ENCODE measurements at regions of chr4 and their contacts with region 1.

Region 1: GRCh38 chr4:55546756-55547465 is at the start of gene CLOCK:
- DNase-seq: peak; percentile 60 to 91 (median 82)
- ATAC-seq: peak; percentile 72
- H3K4me3 ChIP-seq: peak within 1 kb of the TSS; percentile 90 to 91
- H3K4me3 Mint-ChIP-seq: peak within 1 kb of the TSS; percentile 93
- H3K27ac ChIP-seq: peak within 1 kb of the TSS; percentile 71 to 82
- H3K27ac Mint-ChIP-seq: peak within 1 kb of the TSS; percentile 93
- H3K4me1 ChIP-seq: peaks cover 9% of the 10 kb centered on the region
- H3K4me1 Mint-ChIP-seq: peaks cover 40% of the 10 kb centered on the region
- H3K27me3 ChIP-seq: no peaks in the 10 kb centered on the region
- H3K27me3 Mint-ChIP-seq: peaks cover 5% of the 10 kb centered on the region
- CTCF ChIP-seq: peak; percentile 41
- total RNA-seq, gene CLOCK: 3.7 to 4.3 TPM

Region 2: DNA sequence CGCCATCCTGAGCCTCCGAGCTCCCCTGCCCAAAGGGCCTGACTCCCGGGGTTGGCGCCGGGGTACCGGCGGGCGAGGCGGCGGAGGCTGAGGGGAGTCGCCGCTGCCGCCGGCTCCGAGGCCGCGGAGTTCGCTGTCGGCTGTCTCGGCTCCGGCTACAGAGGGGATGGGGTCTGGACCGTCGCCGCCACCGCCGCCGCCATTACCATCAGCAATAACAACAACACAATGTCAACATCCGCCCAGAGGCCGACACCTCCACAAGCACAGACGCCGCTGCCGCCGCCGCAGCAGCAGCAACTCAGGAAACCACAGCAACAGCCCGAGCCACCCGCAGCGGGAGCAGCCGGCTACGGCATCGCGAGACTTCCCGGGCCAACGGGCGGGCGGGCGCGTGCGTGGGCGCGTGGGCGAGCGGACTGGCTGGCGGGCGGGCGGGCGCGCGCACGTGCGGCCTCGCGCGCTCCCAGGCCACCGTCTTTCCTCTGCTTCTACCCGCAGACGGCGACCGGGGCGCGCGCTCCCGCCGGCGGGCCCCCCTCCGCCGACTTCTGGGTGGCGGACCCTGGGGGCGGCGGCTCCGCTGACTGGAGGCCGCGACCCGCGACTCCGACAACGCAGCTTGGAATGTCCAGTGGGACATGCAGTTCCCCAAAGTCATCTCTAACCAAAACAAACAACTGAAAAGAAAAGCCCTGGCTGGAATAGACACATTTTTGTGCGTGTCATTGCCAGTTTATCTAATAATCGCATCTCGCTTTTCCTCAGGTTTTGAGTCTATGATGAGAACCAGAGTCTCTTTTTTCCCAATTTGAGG is 1482.4 kb before region 1 on chr4 and contains the start of gene CHIC2:
- CTCF ChIA-PET with region 1: no interaction called
- POLR2A ChIA-PET with region 1: no interaction called
- intact Hi-C with region 1: loop called (anchors 10 kb)
- DNase-seq: peak; percentile 94 to 99 (median 97)
- ATAC-seq: peak; percentile 86
- H3K4me3 ChIP-seq: peak within 1 kb of the TSS; percentile 91 to 99
- H3K4me3 Mint-ChIP-seq: peak within 1 kb of the TSS; percentile 96
- H3K27ac ChIP-seq: peak within 1 kb of the TSS; percentile 87 to 99
- H3K27ac Mint-ChIP-seq: peak within 1 kb of the TSS; percentile 99
- H3K4me1 ChIP-seq: peaks cover 35% of the 10 kb centered on the region
- H3K4me1 Mint-ChIP-seq: peaks cover 49% of the 10 kb centered on the region
- H3K27me3 ChIP-seq: no peaks in the 10 kb centered on the region
- H3K27me3 Mint-ChIP-seq: no peaks in the 10 kb centered on the region
- CTCF ChIP-seq: no peak
- total RNA-seq, gene CHIC2: 67.3 to 69.3 TPM

Region 3: GRCh38 chr4:55345980-55346850 is 200.7 kb before region 1 on chr4 and contains the start of gene SRD5A3:
- CTCF ChIA-PET with region 1: interaction called, 12 read pairs
- POLR2A ChIA-PET with region 1: interaction called, 12 read pairs
- intact Hi-C with region 1: loop called in 1 of 2 experiments (anchors 2 kb)
- DNase-seq: peak; percentile 57 to 89 (median 81)
- ATAC-seq: peak; percentile 85
- H3K4me3 ChIP-seq: peak within 1 kb of the TSS; percentile 68 to 88
- H3K4me3 Mint-ChIP-seq: peak within 1 kb of the TSS; percentile 86
- H3K27ac ChIP-seq: peak within 1 kb of the TSS; percentile 64 to 81
- H3K27ac Mint-ChIP-seq: peak within 1 kb of the TSS; percentile 85
- H3K4me1 ChIP-seq: peaks cover 9% of the 10 kb centered on the region
- H3K4me1 Mint-ChIP-seq: peaks cover 14% of the 10 kb centered on the region
- H3K27me3 ChIP-seq: no peaks in the 10 kb centered on the region
- H3K27me3 Mint-ChIP-seq: no peaks in the 10 kb centered on the region
- CTCF ChIP-seq: peak; percentile 97
- total RNA-seq, gene SRD5A3: 1.1 TPM

Region 4: GRCh38 chr4:55444827-55445226 is 102.1 kb before region 1 on chr4:
- CTCF ChIA-PET with region 1: interaction called, 18 read pairs
- POLR2A ChIA-PET with region 1: interaction called, 4 read pairs
- intact Hi-C with region 1: loop called (anchors 2 kb)
- DNase-seq: peak in 1 of 9 experiments; percentile 15
- ATAC-seq: no peak
- H3K4me3 ChIP-seq: no peak overlapping the region
- H3K4me3 Mint-ChIP-seq: no peak overlapping the region
- H3K27ac ChIP-seq: no peak overlapping the region
- H3K27ac Mint-ChIP-seq: peak overlapping the region; percentile 39
- H3K4me1 ChIP-seq: no peaks in the 10 kb centered on the region
- H3K4me1 Mint-ChIP-seq: peaks cover 14% of the 10 kb centered on the region
- H3K27me3 ChIP-seq: no peaks in the 10 kb centered on the region
- H3K27me3 Mint-ChIP-seq: no peaks in the 10 kb centered on the region
- CTCF ChIP-seq: peak; percentile 20

Region 5: GRCh38 chr4:55568905-55569504 is 22.1 kb after region 1 on chr4:
- CTCF ChIA-PET with region 1: no interaction called
- POLR2A ChIA-PET with region 1: no interaction called
- intact Hi-C with region 1: no loop called
- DNase-seq: no peak
- ATAC-seq: no peak
- H3K4me3 ChIP-seq: no peak overlapping the region
- H3K4me3 Mint-ChIP-seq: no peak overlapping the region
- H3K27ac ChIP-seq: no peak overlapping the region
- H3K27ac Mint-ChIP-seq: no peak overlapping the region
- H3K4me1 ChIP-seq: no peaks in the 10 kb centered on the region
- H3K4me1 Mint-ChIP-seq: no peaks in the 10 kb centered on the region
- H3K27me3 ChIP-seq: no peaks in the 10 kb centered on the region
- H3K27me3 Mint-ChIP-seq: peaks cover 5% of the 10 kb centered on the region
- CTCF ChIP-seq: no peak

Region 6: DNA sequence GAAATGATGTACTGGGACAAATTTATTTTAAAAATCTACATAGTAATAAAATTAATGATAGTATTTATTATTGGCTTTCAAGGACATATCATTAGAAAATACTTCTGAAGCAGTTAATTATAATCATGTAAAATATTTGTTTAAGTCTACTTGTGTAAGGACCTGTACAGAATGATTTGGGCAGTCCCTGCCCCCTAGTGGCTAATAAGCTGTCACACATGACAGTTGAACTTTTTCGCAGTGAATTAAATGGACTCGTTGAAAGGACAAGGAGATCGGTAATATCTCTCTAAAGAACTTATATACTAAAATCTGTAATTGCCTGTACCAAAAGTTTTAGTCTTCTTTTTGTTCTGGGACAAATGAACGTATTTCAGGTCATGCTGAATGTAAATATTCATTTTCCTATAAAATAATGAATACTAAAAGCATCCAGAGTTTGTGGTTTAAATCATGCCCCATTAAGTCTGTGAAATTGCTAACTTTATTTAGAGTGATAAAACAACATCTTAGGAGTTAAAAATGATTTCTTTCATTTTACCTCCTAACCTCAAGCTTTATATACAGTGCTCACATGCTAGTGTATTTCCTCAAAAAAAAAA is 320.2 kb after region 1 on chr4:
- CTCF ChIA-PET with region 1: no interaction called
- POLR2A ChIA-PET with region 1: no interaction called
- intact Hi-C with region 1: loop called in 1 of 2 experiments (anchors 5 kb)
- DNase-seq: peak in 5 of 9 experiments; percentile 14 to 74 (median 32)
- ATAC-seq: peak; percentile 87
- H3K4me3 ChIP-seq: no peak overlapping the region
- H3K4me3 Mint-ChIP-seq: no peak overlapping the region
- H3K27ac ChIP-seq: no peak overlapping the region
- H3K27ac Mint-ChIP-seq: no peak overlapping the region
- H3K4me1 ChIP-seq: no peaks in the 10 kb centered on the region
- H3K4me1 Mint-ChIP-seq: peaks cover 9% of the 10 kb centered on the region
- H3K27me3 ChIP-seq: no peaks in the 10 kb centered on the region
- H3K27me3 Mint-ChIP-seq: no peaks in the 10 kb centered on the region
- CTCF ChIP-seq: peak; percentile 92

Region 7: GRCh38 chr4:56424697-56425514 is 878.0 kb after region 1 on chr4:
- CTCF ChIA-PET with region 1: no interaction called
- POLR2A ChIA-PET with region 1: no interaction called
- intact Hi-C with region 1: no loop called
- DNase-seq: peak in 7 of 9 experiments; percentile 21 to 71 (median 52)
- ATAC-seq: peak; percentile 61
- H3K4me3 ChIP-seq: no peak overlapping the region
- H3K4me3 Mint-ChIP-seq: no peak overlapping the region
- H3K27ac ChIP-seq: no peak overlapping the region
- H3K27ac Mint-ChIP-seq: no peak overlapping the region
- H3K4me1 ChIP-seq: no peaks in the 10 kb centered on the region
- H3K4me1 Mint-ChIP-seq: peaks cover 8% of the 10 kb centered on the region
- H3K27me3 ChIP-seq: no peaks in the 10 kb centered on the region
- H3K27me3 Mint-ChIP-seq: no peaks in the 10 kb centered on the region
- CTCF ChIP-seq: peak; percentile 90

Region 8: GRCh38 chr4:56530269-56531148 is 983.6 kb after region 1 on chr4:
- CTCF ChIA-PET with region 1: no interaction called
- POLR2A ChIA-PET with region 1: no interaction called
- intact Hi-C with region 1: loop called in 1 of 2 experiments (anchors 10 kb)
- DNase-seq: peak; percentile 51 to 86 (median 81)
- ATAC-seq: peak; percentile 96
- H3K4me3 ChIP-seq: peak overlapping the region; percentile 59 to 87
- H3K4me3 Mint-ChIP-seq: no peak overlapping the region
- H3K27ac ChIP-seq: no peak overlapping the region
- H3K27ac Mint-ChIP-seq: no peak overlapping the region
- H3K4me1 ChIP-seq: peaks cover 6% of the 10 kb centered on the region
- H3K4me1 Mint-ChIP-seq: no peaks in the 10 kb centered on the region
- H3K27me3 ChIP-seq: peaks cover 3 to 5% of the 10 kb centered on the region in 2 experiments
- H3K27me3 Mint-ChIP-seq: peaks cover 9% of the 10 kb centered on the region
- CTCF ChIP-seq: no peak

Region 9: GRCh38 chr4:56907489-56908205 is 1360.7 kb after region 1 on chr4 and contains the start of gene REST:
- CTCF ChIA-PET with region 1: no interaction called
- POLR2A ChIA-PET with region 1: interaction called, 3 read pairs
- intact Hi-C with region 1: loop called (anchors 10 kb)
- DNase-seq: peak; percentile 74 to 91 (median 84)
- ATAC-seq: peak; percentile 67
- H3K4me3 ChIP-seq: peak within 1 kb of the TSS; percentile 64 to 92
- H3K4me3 Mint-ChIP-seq: peak within 1 kb of the TSS; percentile 97
- H3K27ac ChIP-seq: peak within 1 kb of the TSS; percentile 57 to 86
- H3K27ac Mint-ChIP-seq: peak within 1 kb of the TSS; percentile 95
- H3K4me1 ChIP-seq: peaks cover 43% of the 10 kb centered on the region
- H3K4me1 Mint-ChIP-seq: peaks cover 42% of the 10 kb centered on the region
- H3K27me3 ChIP-seq: no peaks in the 10 kb centered on the region
- H3K27me3 Mint-ChIP-seq: no peaks in the 10 kb centered on the region
- CTCF ChIP-seq: no peak
- total RNA-seq, gene REST: 58.9 to 60.7 TPM